ENCODE measurements at regions of chr10 and their contacts with region 1.

Region 1: DNA sequence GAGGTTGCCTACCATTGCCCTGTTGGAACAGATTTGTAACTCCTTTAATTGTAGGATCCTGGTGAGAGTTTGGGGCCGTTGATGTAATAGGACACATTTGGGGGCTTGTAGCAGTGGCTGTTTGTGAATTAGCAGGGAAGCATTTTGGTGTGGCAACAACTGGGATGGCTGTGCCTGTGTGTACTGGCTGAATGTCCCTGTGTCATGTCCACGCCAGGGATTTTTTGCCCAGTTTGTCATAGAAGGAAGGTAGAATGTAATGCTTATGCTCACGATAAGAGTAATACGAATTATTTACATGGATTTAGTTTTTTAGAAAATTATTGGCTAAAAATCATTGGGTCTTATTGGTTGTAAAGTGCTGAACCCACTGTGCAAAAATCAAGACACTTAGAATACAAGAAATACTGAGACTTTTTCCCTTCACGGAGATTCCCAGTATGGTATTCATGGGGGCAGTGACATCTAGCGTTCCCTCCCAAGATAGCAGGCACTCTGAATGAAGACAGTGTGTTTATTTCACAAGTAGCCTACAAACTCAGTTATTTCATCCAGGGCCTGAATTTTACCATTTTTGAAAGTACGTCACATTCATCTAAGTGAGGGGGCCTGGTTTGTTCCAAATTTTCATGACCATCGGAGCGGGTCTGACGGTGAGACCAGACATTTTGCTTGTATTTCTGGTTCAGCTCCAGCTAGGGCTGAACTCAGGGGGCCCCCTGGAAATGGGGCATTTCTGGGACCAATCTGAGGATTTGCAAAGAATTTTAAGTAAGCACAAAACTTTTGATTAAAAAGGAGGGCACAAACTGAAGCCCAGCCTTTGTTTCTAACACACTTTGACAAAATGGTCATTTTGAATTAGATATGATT is 74.7 kb downstream of the CACNB2 start:
- DNase-seq: no peak
- ATAC-seq: peak; percentile 67

Region 2: GRCh38 chr10:17737027-17737965 is 477.6 kb before region 1 on chr10:
- intact Hi-C with region 1: loop called (anchors 10 kb)
- DNase-seq: no peak
- ATAC-seq: peak; percentile 32

Region 3: DNA sequence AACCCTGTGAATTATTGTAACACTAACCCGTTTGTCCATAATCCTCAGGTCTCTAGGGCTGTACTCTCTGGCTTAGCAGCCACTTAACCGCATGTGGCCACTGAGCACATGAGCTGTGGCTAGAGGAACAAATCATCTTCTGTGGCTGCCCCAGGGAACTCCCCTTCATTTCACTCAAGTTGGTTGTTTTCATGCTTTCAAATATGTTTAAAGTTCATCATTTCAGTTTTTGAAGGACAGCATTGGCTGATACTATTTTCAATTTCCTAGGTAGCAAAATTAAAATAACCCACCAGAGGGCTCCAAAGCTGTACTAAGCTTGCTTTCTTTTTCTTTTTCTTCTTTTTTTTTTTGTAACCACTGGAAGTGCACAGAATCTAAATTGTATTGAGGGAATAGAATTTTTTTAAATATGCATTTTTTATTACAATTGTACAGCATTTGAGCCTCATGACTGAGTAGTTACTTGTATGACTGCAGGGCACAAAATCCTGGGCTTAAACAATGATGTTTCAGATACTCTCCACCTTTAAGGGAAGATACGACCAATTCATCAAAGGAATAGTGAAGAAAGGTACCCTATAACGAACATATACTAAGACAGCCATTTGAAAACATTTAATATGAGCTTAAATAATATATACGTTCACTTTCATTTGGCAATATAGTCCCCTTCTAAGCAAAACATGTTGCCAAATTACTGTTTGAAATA is 367.2 kb before region 1 on chr10:
- intact Hi-C with region 1: loop called (anchors 1 kb)
- DNase-seq: no peak
- ATAC-seq: no peak

Region 4: DNA sequence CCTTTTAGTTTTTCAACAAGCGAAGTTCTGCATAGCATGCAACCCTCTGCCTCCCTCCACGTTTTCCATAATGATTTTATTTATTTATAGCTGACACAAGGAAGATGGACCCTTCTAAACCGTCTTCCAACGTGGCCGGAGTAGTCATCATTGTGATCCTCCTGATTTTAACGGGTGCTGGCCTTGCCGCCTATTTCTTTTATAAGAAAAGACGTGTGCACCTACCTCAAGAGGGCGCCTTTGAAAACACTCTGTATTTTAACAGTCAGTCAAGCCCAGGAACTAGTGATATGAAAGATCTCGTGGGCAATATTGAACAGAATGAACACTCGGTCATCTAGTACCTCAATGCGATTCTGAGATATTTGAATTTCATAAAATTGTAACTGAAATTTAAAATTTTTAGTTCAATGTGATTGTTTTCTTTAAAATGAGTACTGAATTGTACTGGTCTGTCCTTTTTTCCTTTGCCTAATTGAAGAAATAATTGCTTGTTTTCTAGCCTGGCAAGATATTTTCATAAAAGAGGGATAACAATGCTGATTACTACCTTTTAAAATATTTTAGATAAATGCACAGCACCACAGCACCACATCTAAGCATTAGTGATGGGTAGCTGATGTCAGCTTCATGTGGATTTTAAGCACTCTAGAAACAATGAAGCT is 304.7 kb before region 1 on chr10:
- intact Hi-C with region 1: loop called (anchors 2 kb)
- DNase-seq: no peak
- ATAC-seq: no peak